ENCODE measurements at regions of chr6 and their contacts with region 1.

Region 1: DNA sequence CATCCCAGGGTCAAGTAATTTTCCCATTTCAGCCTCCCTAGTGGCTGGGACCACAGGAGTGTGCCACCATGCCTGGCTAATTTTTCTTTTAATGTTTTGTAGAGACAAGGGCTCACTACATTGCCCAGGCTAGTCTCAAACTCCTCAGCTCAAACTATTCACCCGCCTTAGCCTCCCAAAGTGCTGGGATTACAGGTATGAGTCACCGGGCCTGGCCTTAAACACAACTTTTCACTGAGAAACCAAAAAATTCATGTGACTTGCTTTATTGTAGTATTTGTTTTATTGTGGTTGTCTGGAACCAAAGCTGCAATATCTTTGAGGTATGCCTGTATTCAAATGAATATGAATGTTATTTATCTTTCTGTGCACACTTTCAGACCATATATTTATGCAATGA is 72.2 kb downstream of the RWDD2A start:
- DNase-seq: peak in 1 of 2 experiments; percentile 10
- H3K4me3 ChIP-seq: no peak overlapping the region
- H3K27ac ChIP-seq: no peak overlapping the region
- H3K4me1 ChIP-seq: no peaks in the 10 kb centered on the region
- H3K27me3 ChIP-seq: no peaks in the 10 kb centered on the region
- CTCF ChIP-seq: no peak

Region 2: GRCh38 chr6:83285917-83286316 is 20.5 kb after region 1 on chr6:
- CTCF ChIA-PET with region 1: no interaction called
- POLR2A ChIA-PET with region 1: no interaction called
- intact Hi-C with region 1: no loop called
- DNase-seq: no peak
- H3K4me3 ChIP-seq: no peak overlapping the region
- H3K27ac ChIP-seq: no peak overlapping the region
- H3K4me1 ChIP-seq: no peaks in the 10 kb centered on the region
- H3K27me3 ChIP-seq: no peaks in the 10 kb centered on the region
- CTCF ChIP-seq: no peak

Region 3: GRCh38 chr6:83354747-83355146 is 89.4 kb after region 1 on chr6:
- CTCF ChIA-PET with region 1: no interaction called
- POLR2A ChIA-PET with region 1: no interaction called
- intact Hi-C with region 1: no loop called
- DNase-seq: no peak
- H3K4me3 ChIP-seq: no peak overlapping the region
- H3K27ac ChIP-seq: no peak overlapping the region
- H3K4me1 ChIP-seq: no peaks in the 10 kb centered on the region
- H3K27me3 ChIP-seq: no peaks in the 10 kb centered on the region
- CTCF ChIP-seq: no peak

Region 4: GRCh38 chr6:83430611-83431563 is 165.5 kb after region 1 on chr6 and contains the start of gene ME1:
- CTCF ChIA-PET with region 1: no interaction called
- POLR2A ChIA-PET with region 1: no interaction called
- intact Hi-C with region 1: loop called (anchors 5 kb)
- DNase-seq: peak; percentile 80 to 90
- H3K4me3 ChIP-seq: peak within 1 kb of the TSS; percentile 91
- H3K27ac ChIP-seq: peak within 1 kb of the TSS; percentile 92
- H3K4me1 ChIP-seq: peaks cover 48% of the 10 kb centered on the region
- H3K27me3 ChIP-seq: no peaks in the 10 kb centered on the region
- CTCF ChIP-seq: no peak
- total RNA-seq, gene ME1: 82.0 and 111 TPM in 2 replicates

Measured in PC-9 (cell line).